ENCODE measurements at regions of chr12 and their contacts with region 1.

Region 1: GRCh38 chr12:94649349-94650142 is 811 bp downstream of the TMCC3 start:
- DNase-seq: no peak
- ATAC-seq: peak; percentile 86
- H3K4me3 ChIP-seq: peak overlapping the region in 2 of 3 experiments; percentile 8 to 55; a peak in 3 of 6 replicates
- H3K27ac ChIP-seq: no peak overlapping the region
- H3K4me1 ChIP-seq: 0 out of 2 replicates have a peak, but pooled peaks cover 6% of the 10 kb centered on the region
- H3K27me3 ChIP-seq: peaks cover 5 to 22% of the 10 kb centered on the region in 2 experiments
- CTCF ChIP-seq: peak; percentile 31; the same call in 1 of the 2 replicates
- EP300 ChIP-seq: no peak
- POLR2A ChIP-seq: no peak
- RAD21 ChIP-seq: no peak

Region 2: GRCh38 chr12:94636462-94637085 is 13.0 kb before region 1 on chr12:
- CTCF ChIA-PET with region 1: no interaction called
- POLR2A ChIA-PET with region 1: no interaction called
- in situ Hi-C with region 1: no loop called
- intact Hi-C with region 1: no loop called
- DNase-seq: no peak
- ATAC-seq: no peak
- H3K4me3 ChIP-seq: no peak overlapping the region
- H3K27ac ChIP-seq: no peak overlapping the region
- H3K4me1 ChIP-seq: peaks cover 6% of the 10 kb centered on the region; the same call in 1 of the 2 replicates
- H3K27me3 ChIP-seq: no peaks in the 10 kb centered on the region; a peak in 2 of 5 replicates
- CTCF ChIP-seq: no peak
- EP300 ChIP-seq: no peak
- POLR2A ChIP-seq: no peak
- RAD21 ChIP-seq: no peak

Region 3: DNA sequence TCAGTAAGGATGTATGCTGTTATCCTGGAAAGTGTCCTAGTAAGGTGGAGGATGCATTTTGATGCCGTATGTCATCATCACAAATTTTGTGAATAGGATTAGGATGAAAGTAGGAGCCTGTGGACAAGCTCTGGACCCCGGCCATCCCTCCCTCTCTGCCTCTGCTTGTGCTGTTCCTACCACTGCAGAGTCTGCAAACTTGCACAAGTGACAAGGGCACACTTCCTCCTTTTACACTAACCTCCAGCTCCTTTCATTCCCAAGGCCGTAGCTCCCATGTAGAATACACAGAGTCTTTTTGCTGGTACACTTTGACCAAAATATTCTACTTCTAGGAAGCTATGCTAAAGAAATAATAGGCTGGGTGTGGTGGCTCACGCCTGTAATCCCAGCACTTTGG is 14.2 kb after region 1 on chr12:
- CTCF ChIA-PET with region 1: no interaction called
- POLR2A ChIA-PET with region 1: no interaction called
- in situ Hi-C with region 1: no loop called
- intact Hi-C with region 1: no loop called
- DNase-seq: no peak
- ATAC-seq: no peak
- H3K4me3 ChIP-seq: no peak overlapping the region
- H3K27ac ChIP-seq: no peak overlapping the region
- H3K4me1 ChIP-seq: no peaks in the 10 kb centered on the region
- H3K27me3 ChIP-seq: peaks cover 0 to 5% of the 10 kb centered on the region in 2 experiments; a peak in 2 of 5 replicates
- CTCF ChIP-seq: no peak
- EP300 ChIP-seq: no peak
- POLR2A ChIP-seq: no peak
- RAD21 ChIP-seq: no peak

Region 4: DNA sequence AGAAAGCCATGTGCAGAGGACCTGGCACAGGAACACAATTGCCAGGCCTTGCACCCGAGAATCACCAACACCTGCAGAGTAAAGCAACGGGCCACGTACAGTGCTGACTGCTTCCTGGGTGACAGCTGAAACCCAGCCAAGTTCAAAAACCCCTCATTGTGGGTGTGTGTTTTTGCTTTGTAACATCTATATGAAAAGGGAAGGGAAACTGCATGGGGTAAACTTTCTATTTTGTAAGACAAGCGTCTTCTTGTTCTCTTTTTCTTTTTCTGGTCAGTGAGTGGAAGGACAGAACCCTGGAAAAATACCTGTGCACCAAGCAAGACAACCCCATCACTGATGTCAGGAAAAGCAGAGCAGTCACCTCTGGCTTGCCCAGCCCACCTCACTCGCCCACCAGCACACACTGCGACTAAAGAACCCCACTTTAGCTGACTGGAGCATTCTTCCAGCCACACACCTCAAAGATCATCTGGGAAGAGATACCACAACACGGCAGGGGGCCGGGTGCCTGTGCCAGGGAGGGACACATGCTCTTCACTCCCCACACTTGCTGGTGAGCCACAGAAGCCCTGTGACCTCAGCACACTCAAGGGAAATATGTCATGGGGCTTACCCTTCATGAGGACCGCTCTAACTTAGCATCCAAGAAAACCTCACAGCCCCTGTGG is 181.7 kb after region 1 on chr12:
- CTCF ChIA-PET with region 1: no interaction called
- POLR2A ChIA-PET with region 1: no interaction called
- in situ Hi-C with region 1: no loop called
- intact Hi-C with region 1: loop called (anchors 10 kb)
- DNase-seq: no peak
- ATAC-seq: no peak; the same call in 2 of the 3 replicates
- H3K4me3 ChIP-seq: no peak overlapping the region
- H3K27ac ChIP-seq: no peak overlapping the region
- H3K4me1 ChIP-seq: peaks cover 5% of the 10 kb centered on the region; the same call in 1 of the 2 replicates
- H3K27me3 ChIP-seq: no peaks in the 10 kb centered on the region; a peak in 1 of 5 replicates
- CTCF ChIP-seq: no peak
- EP300 ChIP-seq: no peak
- POLR2A ChIP-seq: no peak
- RAD21 ChIP-seq: no peak

Region 5: DNA sequence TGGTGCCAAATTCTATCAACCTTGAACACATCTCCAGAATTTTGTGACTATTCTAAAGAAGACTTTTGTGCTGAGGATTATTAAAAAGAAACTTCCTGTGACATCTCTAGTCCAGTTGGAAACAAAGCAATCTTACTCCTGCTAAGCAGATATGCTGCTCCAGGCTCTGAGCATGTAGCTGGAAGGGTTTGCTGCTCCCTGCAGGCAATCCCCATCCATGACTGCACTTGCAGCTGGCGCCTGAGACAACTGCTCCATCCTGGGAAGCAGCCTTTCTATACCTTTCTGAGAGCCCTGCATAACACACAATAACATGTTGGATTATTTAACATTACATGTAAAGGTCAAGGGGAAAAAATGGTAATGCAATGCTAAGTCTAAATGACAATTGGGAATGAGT is 248.8 kb after region 1 on chr12:
- CTCF ChIA-PET with region 1: no interaction called
- POLR2A ChIA-PET with region 1: no interaction called
- in situ Hi-C with region 1: no loop called
- intact Hi-C with region 1: no loop called
- DNase-seq: no peak
- ATAC-seq: peak; percentile 49; the same call in 2 of the 3 replicates
- H3K4me3 ChIP-seq: no peak overlapping the region
- H3K27ac ChIP-seq: no peak overlapping the region
- H3K4me1 ChIP-seq: no peaks in the 10 kb centered on the region
- H3K27me3 ChIP-seq: no peaks in the 10 kb centered on the region
- CTCF ChIP-seq: peak; percentile 25; the same call in 1 of the 2 replicates
- EP300 ChIP-seq: no peak
- POLR2A ChIP-seq: no peak
- RAD21 ChIP-seq: no peak

Measured in HepG2 (cell line).